B cell (primary cell): ENCODE measurements at regions of chr16 and their contacts with region 1.

Region 1: DNA sequence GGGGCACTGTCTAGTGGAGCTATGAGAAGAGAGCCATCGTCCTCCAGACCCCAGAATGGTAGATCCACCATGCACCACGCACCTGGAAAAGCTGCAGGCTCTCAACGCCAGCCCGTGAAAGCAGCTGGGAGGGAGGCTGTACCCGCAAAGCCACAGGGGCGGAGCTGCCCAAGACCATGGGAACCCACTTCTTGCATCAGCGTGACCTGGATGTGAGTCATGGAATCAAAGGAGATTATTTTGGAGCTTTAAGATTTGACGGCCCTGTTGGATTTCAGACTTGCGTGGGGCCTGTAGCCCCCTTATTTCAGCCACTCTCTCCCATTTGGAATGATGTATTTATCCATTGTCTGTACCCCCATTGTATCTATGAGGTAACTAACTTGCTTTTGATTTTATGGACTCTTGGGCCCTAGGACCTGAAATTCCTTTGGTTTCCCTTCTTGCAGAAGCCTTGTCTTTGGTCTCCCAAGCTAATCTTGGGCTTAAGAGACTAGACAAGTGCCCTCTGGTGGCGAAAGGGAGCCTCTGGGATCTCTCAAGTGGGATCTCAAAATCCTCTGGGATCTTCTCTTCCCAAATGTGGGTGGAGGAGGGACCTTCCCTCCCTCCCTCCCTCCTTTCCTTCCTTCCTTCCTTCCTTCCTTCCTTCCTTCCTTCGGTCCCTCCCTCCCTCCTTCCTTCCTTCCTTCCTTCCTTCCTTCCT is 58.2 kb upstream of the HAPSTR1 start:
- DNase-seq: peak; percentile 41
- ATAC-seq: no peak
- H3K4me3 ChIP-seq: no peak overlapping the region
- H3K4me3 Mint-ChIP-seq: no peak overlapping the region
- H3K27ac ChIP-seq: no peak overlapping the region
- H3K27ac Mint-ChIP-seq: no peak overlapping the region
- H3K4me1 ChIP-seq: no peaks in the 10 kb centered on the region
- H3K4me1 Mint-ChIP-seq: no peaks in the 10 kb centered on the region
- H3K27me3 ChIP-seq: peaks cover 0 to 6% (median 0%) of the 10 kb centered on the region in 4 experiments
- H3K27me3 Mint-ChIP-seq: peaks cover 2% of the 10 kb centered on the region
- CTCF ChIP-seq: peak; percentile 20

Region 2: GRCh38 chr16:8905168-8905762 is 128.0 kb before region 1 on chr16:
- CTCF ChIA-PET with region 1: interaction called, 3 read pairs
- POLR2A ChIA-PET with region 1: no interaction called
- intact Hi-C with region 1: loop called (anchors 1 kb)
- DNase-seq: no peak
- ATAC-seq: peak; percentile 47
- H3K4me3 ChIP-seq: no peak overlapping the region
- H3K4me3 Mint-ChIP-seq: no peak overlapping the region
- H3K27ac ChIP-seq: no peak overlapping the region
- H3K27ac Mint-ChIP-seq: peak overlapping the region; percentile 50
- H3K4me1 ChIP-seq: no peaks in the 10 kb centered on the region
- H3K4me1 Mint-ChIP-seq: no peaks in the 10 kb centered on the region
- H3K27me3 ChIP-seq: no peaks in the 10 kb centered on the region
- H3K27me3 Mint-ChIP-seq: no peaks in the 10 kb centered on the region
- CTCF ChIP-seq: peak; percentile 23

Region 3: DNA sequence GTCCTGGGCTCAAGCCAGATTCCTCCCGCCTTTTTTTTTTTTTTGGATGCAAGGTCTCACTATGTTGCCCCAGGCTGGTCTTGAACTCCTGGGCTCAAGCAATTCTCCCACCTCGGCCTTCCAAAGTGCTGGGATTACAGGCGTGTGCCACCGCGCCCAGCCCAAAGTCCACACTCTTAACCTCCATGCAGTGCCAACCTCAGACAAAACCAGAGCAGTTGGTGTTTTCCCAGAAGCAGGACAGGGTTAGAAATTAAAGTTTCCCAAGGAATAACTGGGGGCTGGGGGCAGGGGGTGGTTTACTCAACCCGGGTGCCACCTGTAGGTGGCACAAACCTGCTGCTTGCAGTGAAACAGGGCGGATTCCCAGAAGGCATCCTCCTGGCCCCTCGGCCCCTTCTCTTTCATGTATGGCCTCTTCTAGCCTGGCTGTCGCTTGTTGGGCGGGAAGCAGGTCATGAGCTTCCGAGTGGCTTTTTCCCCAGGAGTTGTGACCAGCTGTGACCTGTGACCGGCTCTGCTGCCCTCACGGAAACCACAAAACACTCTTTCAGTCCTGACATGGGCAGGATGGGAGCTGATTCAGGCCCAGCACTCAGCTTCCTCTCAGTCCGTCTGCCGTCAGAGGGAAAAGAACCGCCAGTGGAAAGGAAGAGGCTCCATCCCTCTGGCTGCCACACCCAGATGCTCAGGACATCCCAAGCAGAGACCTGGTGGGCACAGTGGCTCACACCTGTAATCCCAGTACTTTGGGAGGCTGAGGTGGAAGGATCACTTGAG is 44.0 kb before region 1 on chr16:
- CTCF ChIA-PET with region 1: no interaction called
- POLR2A ChIA-PET with region 1: no interaction called
- intact Hi-C with region 1: no loop called
- DNase-seq: no peak
- ATAC-seq: no peak
- H3K4me3 ChIP-seq: no peak overlapping the region
- H3K4me3 Mint-ChIP-seq: no peak overlapping the region
- H3K27ac ChIP-seq: no peak overlapping the region
- H3K27ac Mint-ChIP-seq: no peak overlapping the region
- H3K4me1 ChIP-seq: no peaks in the 10 kb centered on the region
- H3K4me1 Mint-ChIP-seq: no peaks in the 10 kb centered on the region
- H3K27me3 ChIP-seq: no peaks in the 10 kb centered on the region
- H3K27me3 Mint-ChIP-seq: peaks cover 3% of the 10 kb centered on the region
- CTCF ChIP-seq: no peak

Region 4: DNA sequence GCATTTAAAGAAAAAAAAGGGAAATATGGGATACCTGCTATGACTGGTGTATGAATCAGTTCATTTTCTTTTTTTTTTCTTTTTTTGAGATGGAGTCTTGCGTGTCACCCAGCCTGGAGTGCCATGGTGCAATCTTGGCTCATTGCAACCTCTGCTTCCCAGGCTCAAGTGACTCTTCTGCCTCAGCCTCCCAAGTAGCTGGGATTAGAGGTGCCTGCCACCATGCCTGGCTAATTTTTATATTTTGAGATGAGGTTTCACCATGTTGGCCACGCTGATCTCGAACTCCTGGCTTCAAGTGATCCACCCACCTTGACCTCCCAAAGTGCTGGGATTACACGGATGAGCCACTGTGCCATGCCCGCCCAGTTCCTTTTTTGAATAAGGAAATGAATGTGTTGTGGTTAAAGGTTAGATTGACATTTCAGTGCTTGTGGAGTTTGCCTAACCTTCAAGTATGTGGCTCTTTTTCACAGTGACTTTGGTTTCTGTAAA is 65.9 kb after region 1 on chr16:
- CTCF ChIA-PET with region 1: no interaction called
- POLR2A ChIA-PET with region 1: no interaction called
- intact Hi-C with region 1: no loop called
- DNase-seq: peak; percentile 52
- ATAC-seq: peak; percentile 40
- H3K4me3 ChIP-seq: peak overlapping the region in 2 of 5 experiments; percentile 23 to 42
- H3K4me3 Mint-ChIP-seq: peak overlapping the region; percentile 86
- H3K27ac ChIP-seq: peak overlapping the region; percentile 29 to 62
- H3K27ac Mint-ChIP-seq: peak overlapping the region; percentile 90
- H3K4me1 ChIP-seq: peaks cover 87 to 92% of the 10 kb centered on the region in 2 donors
- H3K4me1 Mint-ChIP-seq: peaks cover 86% of the 10 kb centered on the region
- H3K27me3 ChIP-seq: no peaks in the 10 kb centered on the region
- H3K27me3 Mint-ChIP-seq: no peaks in the 10 kb centered on the region
- CTCF ChIP-seq: no peak